ENCODE measurements at regions of chr1 and their contacts with region 1.

Region 1: DNA sequence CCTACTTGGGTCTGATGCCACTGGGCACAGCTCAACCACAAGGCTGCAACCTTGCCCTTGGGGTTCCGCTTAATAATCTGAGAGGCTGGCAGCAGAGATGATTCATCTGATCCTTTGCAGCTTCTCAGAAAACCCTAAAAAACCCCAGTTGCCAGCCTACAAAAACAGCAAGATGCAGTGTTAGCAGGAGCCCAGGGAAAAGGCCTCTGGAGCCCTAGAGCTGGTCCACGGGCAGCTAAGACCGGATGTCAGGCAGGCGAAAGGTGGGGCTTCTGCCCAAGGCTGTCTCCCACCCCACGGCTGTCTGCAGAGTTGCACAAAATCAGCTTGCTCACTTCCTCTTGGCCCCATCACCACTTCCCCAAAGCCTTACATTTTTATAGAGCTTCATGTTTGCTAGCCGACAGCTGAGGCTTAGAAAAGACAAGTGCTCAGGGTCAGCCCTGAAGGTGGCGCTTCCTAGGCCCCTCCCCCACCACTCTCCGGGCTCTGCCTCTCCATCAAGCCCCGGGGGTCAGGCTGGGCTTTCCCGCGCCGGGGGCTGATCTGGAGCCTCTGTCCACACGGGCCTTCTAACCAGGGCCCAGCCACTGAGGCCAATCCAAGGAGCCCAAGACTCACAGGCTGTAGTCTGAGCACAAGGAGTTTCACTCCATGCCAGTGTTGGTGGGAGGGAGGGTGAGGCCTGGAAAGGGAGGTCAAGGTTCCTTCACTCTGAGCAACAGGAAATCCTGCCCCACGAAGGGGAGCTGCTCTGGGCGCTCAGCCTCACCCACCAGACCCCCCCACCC is 4.2 kb upstream of the ADORA3 start:
- DNase-seq: no peak
- H3K4me3 ChIP-seq: no peak overlapping the region
- H3K27me3 ChIP-seq: no peaks in the 10 kb centered on the region; the same call in 1 of the 2 replicates
- CTCF ChIP-seq: peak; percentile 33

Region 2: DNA sequence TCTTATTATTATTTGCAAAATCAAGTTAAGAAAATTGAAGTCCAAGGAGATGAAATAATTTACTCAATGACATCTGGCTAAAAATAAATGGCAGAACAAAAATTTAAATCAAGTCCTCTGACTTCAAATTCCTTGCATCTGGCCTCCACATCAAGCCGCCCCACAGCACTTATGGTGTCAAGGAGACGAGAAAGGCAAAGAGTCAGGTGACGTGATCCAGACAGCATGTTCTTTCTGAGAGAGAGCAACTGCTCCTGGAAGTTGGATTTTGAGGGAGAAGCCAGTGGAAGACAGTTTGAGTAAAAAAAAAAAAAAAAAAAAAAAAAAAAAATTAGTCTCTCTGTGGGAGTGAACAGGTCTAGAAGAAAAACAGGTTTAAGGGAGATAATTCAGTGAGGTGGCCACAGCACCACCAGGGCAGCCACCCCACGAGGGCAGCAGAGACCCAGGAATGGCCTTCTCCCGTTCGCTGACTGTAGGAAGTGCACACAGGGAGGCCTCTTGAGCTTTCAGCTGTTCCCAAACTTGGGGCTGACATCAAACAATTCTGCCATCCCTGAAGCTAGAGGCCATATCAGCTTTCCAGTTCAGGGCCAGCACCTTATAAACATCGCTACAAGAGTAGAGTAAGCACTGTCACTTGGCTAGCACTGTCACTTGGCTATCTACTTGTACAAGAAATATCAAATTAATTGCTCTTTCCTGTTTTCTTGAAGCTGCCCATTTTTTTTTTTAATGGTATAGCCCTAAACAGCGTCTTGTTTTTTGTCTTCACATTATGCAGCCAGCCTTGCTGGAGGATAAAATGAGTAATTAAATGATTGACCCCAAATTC is 26.0 kb before region 1 on chr1:
- CTCF ChIA-PET with region 1: interaction called, 30 read pairs
- POLR2A ChIA-PET with region 1: no interaction called
- DNase-seq: no peak
- H3K4me3 ChIP-seq: no peak overlapping the region
- H3K27me3 ChIP-seq: no peaks in the 10 kb centered on the region
- CTCF ChIP-seq: peak; percentile 87

Region 3: GRCh38 chr1:111619635-111620440 is 112.2 kb after region 1 on chr1 and contains the start of gene RAP1A:
- CTCF ChIA-PET with region 1: interaction called, 18 read pairs
- POLR2A ChIA-PET with region 1: no interaction called
- DNase-seq: no peak
- H3K4me3 ChIP-seq: peak within 1 kb of the TSS; percentile 84
- H3K27me3 ChIP-seq: no peaks in the 10 kb centered on the region
- CTCF ChIP-seq: no peak
- polyA plus RNA-seq, gene RAP1A: 20.5 and 50.9 TPM in 2 replicates

Region 4: GRCh38 chr1:111658622-111659021 is 151.0 kb after region 1 on chr1:
- CTCF ChIA-PET with region 1: interaction called, 11 read pairs
- POLR2A ChIA-PET with region 1: no interaction called
- DNase-seq: no peak
- H3K4me3 ChIP-seq: no peak overlapping the region
- H3K27me3 ChIP-seq: no peaks in the 10 kb centered on the region
- CTCF ChIP-seq: no peak

Region 5: DNA sequence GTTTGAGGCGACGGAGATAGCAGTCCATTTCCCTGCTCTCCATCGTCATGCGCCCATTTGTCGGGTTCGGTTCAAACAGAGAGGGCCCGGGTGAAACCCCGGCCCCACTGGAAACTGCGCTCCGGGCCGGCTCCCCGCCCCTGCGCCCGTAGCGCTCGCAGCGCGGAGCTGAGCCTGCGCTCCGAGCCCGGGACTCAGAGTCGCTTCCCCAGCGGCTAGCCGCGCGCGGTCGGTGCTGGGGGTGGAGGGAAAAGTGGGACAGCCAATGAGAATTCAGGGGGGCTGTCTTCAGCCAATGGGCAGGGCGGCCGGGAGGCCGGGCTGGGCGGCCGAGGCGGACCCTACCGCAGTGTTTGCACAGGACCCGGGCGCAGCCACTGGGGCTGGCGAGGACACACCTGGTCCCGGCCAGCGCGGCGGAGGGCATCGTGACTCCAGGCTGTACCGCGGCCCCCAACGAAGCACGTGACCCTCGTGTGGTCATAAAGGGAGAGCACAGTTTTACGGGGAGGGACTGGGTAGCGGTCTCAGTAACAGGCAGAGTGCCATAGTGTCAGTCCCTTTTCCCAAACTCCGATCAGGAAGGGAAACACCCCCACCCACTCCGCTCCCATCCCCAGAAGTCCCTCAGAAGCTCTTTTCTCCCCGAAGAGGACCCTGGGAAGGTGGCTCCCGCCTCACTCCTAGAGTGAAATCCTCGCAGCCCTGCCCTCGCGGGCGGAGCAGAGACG is 231.8 kb after region 1 on chr1 and contains the start of gene INKA2:
- CTCF ChIA-PET with region 1: interaction called, 14 read pairs
- POLR2A ChIA-PET with region 1: interaction called, 5 read pairs
- DNase-seq: no peak
- H3K4me3 ChIP-seq: peak within 1 kb of the TSS; percentile 62
- H3K27me3 ChIP-seq: no peaks in the 10 kb centered on the region
- CTCF ChIP-seq: no peak
- polyA plus RNA-seq, gene INKA2: 2.3 and 2.8 TPM in 2 replicates

Region 6: DNA sequence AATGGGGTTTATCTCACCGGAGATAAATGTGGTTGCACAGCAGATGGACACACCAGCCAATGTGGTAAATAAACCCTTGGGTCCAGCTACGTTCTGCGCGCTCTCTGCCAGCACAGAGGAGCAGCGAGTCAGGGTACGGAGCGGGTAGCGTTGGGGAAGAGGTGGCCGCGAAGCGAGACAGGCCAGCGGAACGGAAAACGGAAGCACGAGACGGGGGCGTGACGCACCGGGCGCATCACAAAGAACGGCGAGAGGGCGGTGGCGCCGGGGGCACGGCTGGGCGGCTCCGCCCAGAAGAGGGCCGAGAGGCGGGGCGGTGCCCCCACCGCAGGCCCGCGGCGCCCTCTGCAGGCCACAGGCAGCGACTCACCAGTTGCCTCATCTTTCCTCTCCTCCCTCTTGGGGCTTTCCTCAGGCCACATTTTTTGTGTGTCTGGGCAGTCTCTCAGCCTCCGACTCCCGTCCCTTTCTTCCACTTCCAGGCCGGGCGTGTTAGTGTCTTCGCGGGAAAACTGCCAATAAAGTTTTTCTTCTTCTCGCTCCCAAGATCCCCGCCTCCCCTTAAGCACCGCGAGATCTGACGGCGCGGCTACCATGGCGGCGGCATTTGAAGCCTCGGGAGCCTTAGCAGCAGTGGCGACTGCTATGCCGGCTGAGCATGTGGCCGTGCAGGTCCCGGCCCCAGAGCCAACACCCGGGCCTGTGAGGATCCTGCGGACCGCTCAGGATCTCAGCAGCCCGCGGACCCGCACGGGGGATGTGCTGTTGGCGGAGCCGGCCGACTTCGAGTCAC is 247.9 kb after region 1 on chr1 and contains the start of gene DDX20:
- CTCF ChIA-PET with region 1: interaction called, 25 read pairs
- POLR2A ChIA-PET with region 1: no interaction called
- DNase-seq: peak; percentile 86
- H3K4me3 ChIP-seq: peak within 1 kb of the TSS; percentile 90
- H3K27me3 ChIP-seq: no peaks in the 10 kb centered on the region
- CTCF ChIP-seq: peak; percentile 72
- polyA plus RNA-seq, gene DDX20: 6.9 and 12.9 TPM in 2 replicates

Region 7: DNA sequence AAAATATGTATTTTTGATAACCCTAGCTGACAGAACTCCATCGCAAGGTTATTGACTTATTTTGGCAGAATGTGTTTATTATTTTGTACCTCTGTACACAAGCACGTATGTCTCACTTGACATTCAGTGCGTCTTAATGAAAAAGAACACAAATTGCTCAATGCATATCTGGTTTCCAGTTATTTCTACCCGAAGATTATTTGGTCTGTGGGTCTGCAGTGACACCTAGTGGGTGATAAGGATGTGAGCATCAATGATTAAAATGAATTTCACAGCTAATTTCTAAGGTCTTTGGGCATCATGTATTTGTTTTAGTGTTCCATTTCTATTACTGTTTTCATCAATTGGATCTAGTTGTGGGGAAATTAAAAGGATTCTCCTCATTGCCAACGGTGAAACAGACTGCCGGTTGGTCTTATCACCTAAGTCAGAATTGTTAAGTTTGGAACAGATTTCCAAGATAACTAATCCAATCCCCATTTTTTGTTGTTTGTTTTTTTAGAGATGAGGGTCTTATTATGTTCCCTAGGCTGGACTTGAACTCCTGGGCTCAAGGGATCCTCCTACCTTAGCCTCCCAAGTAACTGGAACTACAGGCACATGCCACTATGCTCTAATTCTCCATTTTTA is 262.0 kb after region 1 on chr1:
- CTCF ChIA-PET with region 1: interaction called, 24 read pairs
- POLR2A ChIA-PET with region 1: no interaction called
- DNase-seq: no peak
- H3K4me3 ChIP-seq: no peak overlapping the region
- H3K27me3 ChIP-seq: no peaks in the 10 kb centered on the region
- CTCF ChIP-seq: peak; percentile 74

Measured in BJ (cell line).